ENCODE measurements at regions of chr11 and their contacts with region 1.

Region 1: DNA sequence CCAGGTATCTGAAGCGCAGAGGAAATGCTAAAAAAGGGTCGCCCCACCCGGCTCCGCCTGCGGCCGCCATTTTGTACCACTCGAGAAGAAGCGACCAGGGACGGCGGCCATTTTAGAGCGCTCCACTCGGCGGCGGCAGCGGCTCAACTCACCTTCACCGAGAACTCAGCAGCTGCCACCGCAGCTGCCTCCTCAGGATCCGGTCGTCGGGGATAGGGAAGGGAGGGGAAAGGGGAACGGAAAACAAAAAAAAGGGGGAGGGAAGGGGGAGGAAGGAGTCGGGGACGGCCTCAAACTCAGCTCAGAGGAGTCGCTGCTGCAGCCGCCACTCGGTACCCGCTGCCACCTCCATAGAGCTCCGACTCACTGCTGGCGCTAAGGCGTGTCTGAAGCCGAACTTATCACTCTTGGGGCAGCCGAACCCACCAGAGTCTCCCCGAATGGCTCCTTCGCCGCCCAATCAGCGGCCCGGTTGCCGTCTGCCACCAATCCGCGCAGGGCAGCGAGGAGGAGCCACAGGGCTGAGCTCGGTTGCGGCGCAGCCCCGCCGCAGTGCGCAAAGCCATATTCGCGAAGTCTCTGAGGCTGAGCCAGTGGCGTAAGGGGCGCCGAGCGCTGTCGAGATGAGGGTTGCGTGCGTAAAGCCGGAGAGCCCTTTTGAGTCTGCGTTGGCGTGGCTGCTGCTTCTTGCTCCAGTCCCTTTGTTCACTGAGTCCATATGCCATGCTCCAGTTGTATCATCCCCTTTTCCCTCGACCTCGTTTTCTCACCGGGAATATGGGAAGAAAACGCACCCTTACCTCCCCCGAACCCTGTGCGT is at the start of gene EIF4G2:
- DNase-seq: peak; percentile 97

Region 2: DNA sequence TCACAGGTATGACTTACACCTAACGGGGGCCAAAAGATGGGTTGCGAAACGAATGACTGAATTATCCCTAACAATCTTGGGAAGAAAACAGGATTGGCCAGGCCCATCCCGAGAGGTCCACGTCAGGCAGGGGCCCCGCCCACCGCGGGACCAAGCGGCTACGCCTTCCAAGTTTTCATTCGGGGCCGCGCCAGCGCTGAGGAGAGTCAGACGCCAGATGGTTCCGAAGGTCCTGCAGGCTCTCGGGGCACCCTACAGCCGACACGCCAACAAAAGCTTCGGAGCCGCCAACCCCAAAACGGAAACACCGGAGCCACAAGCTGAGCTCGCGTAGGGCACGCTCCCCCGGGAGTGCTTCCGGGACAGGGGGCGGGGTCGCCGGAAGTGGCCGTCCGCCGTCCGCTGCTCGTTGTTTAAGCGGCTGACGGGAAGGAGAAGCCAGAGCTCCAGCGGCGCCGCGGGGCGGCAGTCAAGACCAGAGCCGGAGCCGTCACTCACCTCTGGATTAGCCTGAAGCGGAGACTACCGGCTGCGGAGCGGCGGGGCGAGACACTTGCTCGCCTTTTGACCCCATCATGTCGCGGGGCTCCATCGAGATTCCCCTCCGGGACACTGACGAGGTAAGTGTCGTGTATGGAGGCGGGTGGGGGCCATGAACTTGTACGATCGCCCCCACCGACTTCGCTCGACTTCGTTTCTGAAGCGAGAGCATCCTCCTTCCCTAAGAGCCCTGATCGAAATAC is 57.8 kb before region 1 on chr11 and contains the start of gene CTR9:
- CTCF ChIA-PET with region 1: no interaction called
- POLR2A ChIA-PET with region 1: interaction called, 12 read pairs
- DNase-seq: peak; percentile 88

Region 3: DNA sequence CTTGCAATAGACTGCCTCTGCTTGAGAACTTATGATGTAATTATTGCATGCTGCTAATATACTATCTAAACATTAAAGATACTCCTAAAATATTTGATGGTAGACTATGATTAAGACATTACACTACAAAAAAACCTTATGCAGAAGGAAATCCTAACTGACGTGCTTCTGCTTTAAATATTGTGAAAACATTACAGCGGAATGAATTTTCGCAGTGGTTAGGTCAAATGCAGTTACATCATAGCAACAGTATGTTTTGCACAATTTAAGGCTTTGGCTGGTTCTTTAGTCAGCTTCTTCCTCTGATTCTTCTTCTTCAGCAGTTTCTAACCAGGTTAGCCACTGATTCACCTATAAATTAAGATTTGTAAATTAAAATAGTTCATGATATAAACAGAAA is 11.2 kb before region 1 on chr11:
- CTCF ChIA-PET with region 1: interaction called, 12 read pairs
- POLR2A ChIA-PET with region 1: interaction called, 63 read pairs
- DNase-seq: no peak

Region 4: DNA sequence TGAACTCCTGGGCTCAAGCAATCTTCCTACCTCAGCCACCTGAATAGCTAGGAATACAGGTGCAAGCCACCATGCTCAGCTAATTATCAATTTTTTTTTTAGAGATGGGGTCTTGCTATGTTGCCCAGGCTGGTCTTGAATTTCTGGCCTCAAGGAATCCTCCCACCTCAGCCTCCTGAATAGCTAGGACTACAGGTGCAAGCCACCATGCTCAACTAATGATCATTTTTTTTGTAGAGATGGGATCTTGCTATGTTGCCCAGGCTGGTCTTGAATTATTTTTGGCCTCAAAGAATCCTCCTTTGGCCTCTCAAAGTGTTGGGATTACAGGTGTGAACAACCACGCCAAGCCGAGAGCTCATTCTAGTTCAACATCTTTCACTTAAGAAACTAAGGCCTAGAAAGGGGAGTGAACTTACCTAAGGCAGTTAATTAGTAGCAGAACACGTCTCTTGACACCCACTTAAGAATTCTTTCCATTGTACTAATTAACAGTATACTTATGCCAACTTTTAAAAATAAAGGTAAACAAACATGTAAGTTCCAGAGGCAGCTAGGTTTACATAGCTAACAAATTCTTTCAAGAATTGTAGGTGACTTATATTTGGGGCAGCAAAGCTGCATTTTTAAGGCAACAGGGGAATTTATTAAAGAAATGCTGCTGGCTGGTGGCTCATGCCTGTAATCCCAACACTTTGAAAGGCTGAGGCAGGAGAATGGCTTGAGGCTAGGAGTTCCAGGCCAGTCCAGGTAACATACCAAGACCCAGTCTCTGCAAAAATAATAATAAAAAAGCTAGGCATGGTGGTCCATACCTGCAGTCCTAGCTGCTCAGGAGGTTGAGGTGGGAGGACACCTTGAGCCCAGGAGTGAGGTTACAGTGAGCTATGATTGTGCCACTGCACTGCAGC is 39.5 kb after region 1 on chr11:
- CTCF ChIA-PET with region 1: no interaction called
- POLR2A ChIA-PET with region 1: interaction called, 31 read pairs
- DNase-seq: no peak

Region 5: GRCh38 chr11:10899121-10899830 is 90.5 kb after region 1 on chr11:
- CTCF ChIA-PET with region 1: no interaction called
- POLR2A ChIA-PET with region 1: interaction called, 35 read pairs
- DNase-seq: no peak

Region 6: GRCh38 chr11:10926801-10927211 is 118.0 kb after region 1 on chr11:
- CTCF ChIA-PET with region 1: interaction called, 5 read pairs
- POLR2A ChIA-PET with region 1: interaction called, 40 read pairs
- DNase-seq: no peak